ENCODE measurements at regions of chr4 and their contacts with region 1.

Region 1: GRCh38 chr4:111631215-111631999 is 513.8 kb upstream of the FAM241A start:
- DNase-seq: no peak
- ATAC-seq: no peak
- H3K4me3 Mint-ChIP-seq: no peak overlapping the region
- H3K27ac Mint-ChIP-seq: no peak overlapping the region
- H3K4me1 Mint-ChIP-seq: no peaks in the 10 kb centered on the region
- H3K27me3 Mint-ChIP-seq: peaks cover 2% of the 10 kb centered on the region
- CTCF ChIP-seq: no peak

Region 2: GRCh38 chr4:109998867-109999584 is 1632.4 kb before region 1 on chr4:
- CTCF ChIA-PET with region 1: no interaction called
- POLR2A ChIA-PET with region 1: no interaction called
- intact Hi-C with region 1: loop called (anchors 5 kb)
- DNase-seq: no peak
- ATAC-seq: peak; percentile 61
- H3K4me3 Mint-ChIP-seq: no peak overlapping the region
- H3K27ac Mint-ChIP-seq: no peak overlapping the region
- H3K4me1 Mint-ChIP-seq: peaks cover 9% of the 10 kb centered on the region
- H3K27me3 Mint-ChIP-seq: peaks cover 5% of the 10 kb centered on the region
- CTCF ChIP-seq: peak; percentile 66

Region 3: DNA sequence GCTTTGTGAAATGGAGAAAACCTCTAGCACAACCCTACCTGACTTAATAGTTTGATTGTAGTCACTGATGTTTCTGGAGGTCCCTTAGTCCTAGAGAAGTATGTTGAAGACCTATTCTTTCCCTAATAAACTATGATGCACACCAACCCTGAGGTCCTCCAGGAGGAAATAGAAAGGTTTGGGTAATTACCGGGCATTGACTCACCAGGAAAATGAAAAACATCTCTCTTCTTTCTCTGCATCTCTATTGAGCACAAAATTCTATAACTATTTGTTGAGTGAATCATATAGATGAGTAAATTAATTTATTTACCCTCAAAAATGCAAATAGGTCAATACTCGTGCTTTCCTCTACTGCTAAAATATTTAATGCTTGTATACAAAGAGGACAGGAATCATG is 68.6 kb before region 1 on chr4:
- CTCF ChIA-PET with region 1: no interaction called
- POLR2A ChIA-PET with region 1: no interaction called
- intact Hi-C with region 1: no loop called
- DNase-seq: no peak
- ATAC-seq: no peak
- H3K4me3 Mint-ChIP-seq: no peak overlapping the region
- H3K27ac Mint-ChIP-seq: no peak overlapping the region
- H3K4me1 Mint-ChIP-seq: no peaks in the 10 kb centered on the region
- H3K27me3 Mint-ChIP-seq: no peaks in the 10 kb centered on the region
- CTCF ChIP-seq: no peak

Measured in activated B cell treated with CpG ODN at 0.5 μM for 24 hours (primary cell).